ENCODE measurements at regions of chr16 and their contacts with region 1.

Region 1: DNA sequence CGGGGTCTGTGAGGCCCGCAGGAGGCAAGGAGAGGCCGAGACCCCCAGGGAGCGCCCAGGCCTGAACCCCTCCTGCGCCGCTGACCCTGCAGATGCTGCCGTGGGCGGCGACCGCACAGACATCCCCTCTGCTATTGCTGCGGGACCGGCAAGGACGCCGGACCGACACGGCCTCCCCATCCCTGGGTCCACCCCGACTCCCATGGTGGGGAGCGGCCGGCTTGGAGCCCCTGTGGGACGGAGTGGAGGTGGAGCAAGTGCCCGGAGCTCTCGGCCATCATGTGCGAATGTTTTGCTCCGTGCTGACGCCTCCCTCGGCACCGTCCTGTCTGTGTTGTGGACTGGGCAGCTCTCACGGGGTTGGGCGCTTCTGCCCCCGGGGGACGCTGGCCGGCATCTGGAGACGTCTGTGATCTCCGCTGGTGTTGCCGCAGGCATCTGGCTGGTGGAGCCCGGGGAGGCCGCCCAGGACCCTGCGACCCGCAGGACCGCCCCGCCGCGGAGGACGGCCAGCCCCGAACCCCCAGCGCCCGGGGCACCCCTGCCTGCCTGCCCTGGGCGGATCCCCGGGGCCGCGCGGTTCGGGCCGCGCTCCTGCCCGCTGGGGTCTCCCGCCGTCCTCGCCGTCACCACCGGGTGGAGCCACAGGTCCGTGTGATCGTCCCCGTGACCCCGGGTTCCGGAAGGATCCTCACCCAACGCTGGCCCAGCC is 12.8 kb upstream of the GNG13 start:
- DNase-seq: peak; percentile 60
- ATAC-seq: peak; percentile 77
- H3K4me3 Mint-ChIP-seq: no peak overlapping the region
- H3K27ac Mint-ChIP-seq: no peak overlapping the region
- H3K4me1 Mint-ChIP-seq: peaks cover 3% of the 10 kb centered on the region
- H3K27me3 Mint-ChIP-seq: peaks cover 14% of the 10 kb centered on the region

Region 2: DNA sequence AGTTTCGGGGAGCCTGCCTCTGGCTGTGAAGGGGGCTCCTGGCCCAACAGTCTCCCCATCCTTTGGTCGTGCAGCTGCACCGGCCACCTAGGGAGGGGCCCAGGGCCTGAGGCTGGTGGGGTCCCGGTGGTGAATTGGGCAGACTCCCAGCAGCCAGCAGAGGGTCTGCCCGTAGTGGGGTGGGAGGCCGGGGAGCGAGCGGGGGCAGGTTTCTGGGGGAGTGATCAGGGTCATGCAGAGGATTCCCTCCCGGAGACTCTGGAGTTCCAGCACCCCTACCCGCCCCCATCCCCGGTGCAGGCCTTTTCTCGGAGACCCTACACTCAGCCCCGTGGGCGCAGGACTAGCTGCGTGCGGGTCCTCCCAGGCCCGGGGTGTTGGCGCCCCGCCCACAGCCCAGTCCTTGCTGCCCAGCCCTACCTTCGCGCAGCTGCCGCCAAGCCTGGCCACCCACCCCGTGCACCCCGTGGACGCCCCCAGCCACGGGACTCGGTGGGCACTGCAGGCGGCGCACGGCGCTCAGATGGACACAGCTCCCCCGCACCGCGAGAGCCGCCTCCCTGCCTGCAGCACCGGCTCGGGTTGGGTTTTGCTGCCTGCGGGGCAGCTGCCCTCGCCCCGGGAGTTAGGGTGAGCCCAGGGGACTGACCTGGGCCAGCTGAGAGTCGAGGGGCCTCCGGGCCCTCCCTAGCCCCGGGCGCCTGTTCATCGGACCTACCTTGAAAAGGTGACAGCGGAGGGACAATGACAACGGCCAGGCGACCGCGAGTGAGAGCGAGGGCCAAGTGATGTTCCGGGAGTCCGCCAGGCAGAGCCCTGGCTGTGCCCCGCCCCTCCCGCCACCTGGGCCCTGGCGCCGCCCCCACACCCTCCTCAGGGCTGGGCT is 13.2 kb before region 1 on chr16 and contains the start of gene GNG13:
- CTCF ChIA-PET with region 1: no interaction called
- POLR2A ChIA-PET with region 1: no interaction called
- DNase-seq: no peak
- ATAC-seq: no peak
- H3K4me3 Mint-ChIP-seq: no peak within 1 kb of the TSS
- H3K27ac Mint-ChIP-seq: no peak within 1 kb of the TSS
- H3K4me1 Mint-ChIP-seq: peaks cover 8% of the 10 kb centered on the region
- H3K27me3 Mint-ChIP-seq: no peaks in the 10 kb centered on the region
- total RNA-seq, gene GNG13: not detected

Region 3: DNA sequence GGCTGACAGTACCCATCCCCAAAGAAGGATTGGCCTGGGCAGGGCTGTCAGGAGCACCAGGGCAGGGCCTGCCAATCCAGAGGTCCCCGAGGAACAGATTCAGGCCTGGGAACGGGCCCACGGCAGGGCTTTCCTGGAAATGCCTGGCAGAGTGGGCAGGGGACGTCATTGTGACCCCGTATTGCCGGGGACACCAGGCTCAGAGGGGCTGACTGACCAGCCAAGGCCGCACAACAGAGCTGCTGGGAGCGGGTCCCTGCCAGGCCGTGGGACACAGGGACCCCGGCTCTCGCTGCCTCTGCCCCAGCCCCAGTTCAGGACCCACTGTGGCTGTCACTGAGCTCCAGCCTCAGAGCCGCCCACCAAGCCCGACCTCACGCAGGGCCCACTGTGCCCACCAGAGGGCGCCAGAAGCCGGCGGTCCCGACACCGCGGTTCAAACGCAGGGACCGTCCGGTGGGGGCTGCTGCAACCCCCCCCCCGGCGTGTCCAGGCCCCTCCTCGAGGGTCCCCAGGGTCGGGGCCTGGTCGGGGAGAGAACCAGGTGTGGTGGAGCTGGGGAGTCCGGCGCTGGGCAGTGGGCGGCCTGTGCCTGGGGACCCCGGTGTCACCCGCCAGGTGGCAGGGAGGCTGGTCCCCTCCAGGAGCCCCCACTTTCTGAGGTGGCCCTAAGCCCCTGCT is 244.0 kb after region 1 on chr16:
- CTCF ChIA-PET with region 1: interaction called, 12 read pairs
- POLR2A ChIA-PET with region 1: no interaction called
- DNase-seq: peak; percentile 61
- ATAC-seq: peak; percentile 72
- H3K4me3 Mint-ChIP-seq: no peak overlapping the region
- H3K27ac Mint-ChIP-seq: no peak overlapping the region
- H3K4me1 Mint-ChIP-seq: no peaks in the 10 kb centered on the region
- H3K27me3 Mint-ChIP-seq: no peaks in the 10 kb centered on the region

Measured in activated CD8-positive, alpha-beta T cell treated with anti-CD3 and anti-CD28 coated beads, Interleukin-2, amount 10 ng/mL, durations not matched to agents 7 days and 5 days (primary cell).